ENCODE measurements at regions of chr12 and their contacts with region 1.

Region 1: GRCh38 chr12:87953256-87953860 is 75.8 kb downstream of the C12orf50 start:
- DNase-seq: peak; percentile 53
- ATAC-seq: peak; percentile 66; the same call in 1 of the 2 replicates
- H3K4me3 ChIP-seq: no peak overlapping the region
- H3K27ac ChIP-seq: no peak overlapping the region
- H3K4me1 ChIP-seq: no peaks in the 10 kb centered on the region
- H3K27me3 ChIP-seq: no peaks in the 10 kb centered on the region
- CTCF ChIP-seq: peak; percentile 81

Region 2: GRCh38 chr12:86249851-86250250 is 1703.5 kb before region 1 on chr12:
- CTCF ChIA-PET with region 1: no interaction called
- POLR2A ChIA-PET with region 1: no interaction called
- intact Hi-C with region 1: loop called (anchors 10 kb)
- DNase-seq: no peak
- ATAC-seq: 0 out of 2 replicates have a peak, but pooled peaks have one; percentile 53
- H3K4me3 ChIP-seq: no peak overlapping the region
- H3K27ac ChIP-seq: no peak overlapping the region
- H3K4me1 ChIP-seq: no peaks in the 10 kb centered on the region
- H3K27me3 ChIP-seq: no peaks in the 10 kb centered on the region; the same call in 1 of the 2 replicates
- CTCF ChIP-seq: no peak

Region 3: GRCh38 chr12:87344699-87345098 is 608.7 kb before region 1 on chr12:
- CTCF ChIA-PET with region 1: no interaction called
- POLR2A ChIA-PET with region 1: no interaction called
- intact Hi-C with region 1: loop called (anchors 5 kb)
- DNase-seq: peak; percentile 55
- ATAC-seq: no peak
- H3K4me3 ChIP-seq: no peak overlapping the region
- H3K27ac ChIP-seq: no peak overlapping the region
- H3K4me1 ChIP-seq: peaks cover 25% of the 10 kb centered on the region
- H3K27me3 ChIP-seq: no peaks in the 10 kb centered on the region
- CTCF ChIP-seq: peak; percentile 72

Region 4: GRCh38 chr12:87982208-87982607 is 28.9 kb after region 1 on chr12:
- CTCF ChIA-PET with region 1: no interaction called
- POLR2A ChIA-PET with region 1: no interaction called
- intact Hi-C with region 1: no loop called
- DNase-seq: no peak
- ATAC-seq: no peak
- H3K4me3 ChIP-seq: no peak overlapping the region
- H3K27ac ChIP-seq: no peak overlapping the region
- H3K4me1 ChIP-seq: no peaks in the 10 kb centered on the region
- H3K27me3 ChIP-seq: no peaks in the 10 kb centered on the region
- CTCF ChIP-seq: no peak

Region 5: GRCh38 chr12:87995581-87996178 is 42.3 kb after region 1 on chr12:
- CTCF ChIA-PET with region 1: no interaction called
- POLR2A ChIA-PET with region 1: no interaction called
- intact Hi-C with region 1: loop called (anchors 1 kb)
- DNase-seq: peak; percentile 79
- ATAC-seq: peak; percentile 98
- H3K4me3 ChIP-seq: no peak overlapping the region
- H3K27ac ChIP-seq: no peak overlapping the region
- H3K4me1 ChIP-seq: 0 out of 2 replicates have a peak, but pooled peaks cover 4% of the 10 kb centered on the region
- H3K27me3 ChIP-seq: no peaks in the 10 kb centered on the region
- CTCF ChIP-seq: peak; percentile 91

Region 6: GRCh38 chr12:88015825-88016224 is 62.5 kb after region 1 on chr12:
- CTCF ChIA-PET with region 1: no interaction called
- POLR2A ChIA-PET with region 1: no interaction called
- intact Hi-C with region 1: no loop called
- DNase-seq: no peak
- ATAC-seq: no peak
- H3K4me3 ChIP-seq: no peak overlapping the region
- H3K27ac ChIP-seq: no peak overlapping the region
- H3K4me1 ChIP-seq: no peaks in the 10 kb centered on the region
- H3K27me3 ChIP-seq: no peaks in the 10 kb centered on the region
- CTCF ChIP-seq: no peak

Region 7: GRCh38 chr12:88207921-88208620 is 254.7 kb after region 1 on chr12:
- CTCF ChIA-PET with region 1: no interaction called
- POLR2A ChIA-PET with region 1: no interaction called
- intact Hi-C with region 1: no loop called
- DNase-seq: no peak
- ATAC-seq: no peak
- H3K4me3 ChIP-seq: no peak overlapping the region
- H3K27ac ChIP-seq: no peak overlapping the region
- H3K4me1 ChIP-seq: no peaks in the 10 kb centered on the region
- H3K27me3 ChIP-seq: no peaks in the 10 kb centered on the region
- CTCF ChIP-seq: no peak

Measured in PC-3 (cell line).